Ovary (tissue), 10 donors: ENCODE measurements at regions of chr20 and their contacts with region 1.

Region 1: DNA sequence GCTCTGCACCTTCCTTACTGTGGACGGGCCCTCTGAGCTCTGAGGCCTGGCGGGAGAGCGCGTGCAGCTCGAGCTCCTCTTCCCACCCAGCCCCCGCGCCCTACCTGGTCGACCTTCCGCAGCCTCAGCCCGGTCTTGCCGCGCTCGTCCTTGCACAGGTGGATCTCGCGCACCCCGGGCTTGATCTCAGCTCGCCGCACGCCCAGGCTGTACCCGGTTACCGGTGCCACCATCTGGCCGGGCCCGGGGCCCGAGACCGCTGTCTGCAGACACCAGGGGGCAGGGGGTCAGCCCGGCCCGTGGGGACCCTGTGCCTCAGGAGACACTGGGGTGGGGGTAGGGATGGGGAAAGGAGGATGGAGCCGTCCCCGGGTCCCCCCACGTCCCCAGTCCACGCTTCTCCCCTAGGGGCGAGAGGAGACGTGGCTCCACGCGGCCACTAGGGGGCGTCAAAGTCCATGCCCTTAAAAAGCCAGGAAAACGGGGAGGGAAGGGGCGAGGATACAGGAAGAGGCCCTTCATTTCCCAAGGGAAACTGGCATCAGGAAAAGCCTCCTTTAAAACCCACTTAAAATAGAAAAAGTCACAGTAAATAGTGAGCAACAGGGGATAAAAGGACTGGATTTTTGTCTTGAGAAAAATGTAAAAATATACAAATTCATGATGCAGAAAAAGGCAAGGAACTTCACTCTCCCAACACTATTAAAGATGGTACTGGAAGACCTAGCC is 15.5 kb downstream of the SDCBP2 start:
- DNase-seq: peak; percentile 79 to 88 (median 85)
- H3K4me3 ChIP-seq: no peak overlapping the region
- H3K27ac ChIP-seq: no peak overlapping the region
- H3K4me1 ChIP-seq: peaks cover 2% of the 10 kb centered on the region
- H3K27me3 ChIP-seq: no peaks in the 10 kb centered on the region
- CTCF ChIP-seq: peak; percentile 82 to 97 (median 95)
- EP300 ChIP-seq: no peak
- POLR2A ChIP-seq: no peak

Region 2: DNA sequence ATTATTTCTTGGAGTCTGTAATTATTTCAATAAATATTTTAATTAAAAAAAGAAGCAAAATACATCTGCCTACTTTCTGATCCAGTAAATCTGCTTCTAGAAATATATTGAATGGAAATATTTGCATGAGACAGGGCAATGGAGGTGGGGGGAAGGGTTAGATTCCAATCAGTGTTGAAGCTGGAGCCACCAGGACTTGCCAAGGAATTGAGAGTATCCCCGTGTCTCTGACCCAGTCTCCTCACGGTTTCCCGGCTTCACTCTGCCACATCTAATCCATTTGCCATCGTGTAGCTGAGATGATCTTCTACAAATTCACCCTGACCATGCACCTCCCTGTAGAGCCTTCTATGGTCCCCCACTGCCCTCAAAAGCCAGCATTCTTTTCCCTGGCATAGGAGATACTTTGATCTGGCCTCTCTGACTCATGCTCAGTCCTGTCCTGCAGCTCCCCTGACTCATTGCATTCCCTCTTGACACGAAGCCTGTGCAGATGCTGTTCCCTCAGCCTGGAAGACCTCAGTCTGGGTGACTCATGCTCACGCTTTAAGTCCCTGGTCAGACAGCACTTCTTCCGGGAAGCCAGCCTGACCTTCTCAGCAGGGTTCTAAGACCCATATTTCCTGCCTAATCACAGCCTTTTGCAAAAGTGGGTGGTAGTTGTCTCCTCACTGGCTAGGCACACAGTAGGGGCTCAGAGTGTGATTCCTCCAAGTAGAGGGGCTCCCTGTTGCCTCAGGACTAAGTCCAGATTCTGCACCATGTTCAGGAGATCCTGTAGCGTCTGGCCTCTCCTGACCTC is 102.5 kb after region 1 on chr20:
- intact Hi-C with region 1: no loop called
- DNase-seq: no peak
- H3K4me3 ChIP-seq: no peak overlapping the region
- H3K27ac ChIP-seq: no peak overlapping the region
- H3K4me1 ChIP-seq: no peaks in the 10 kb centered on the region
- H3K27me3 ChIP-seq: no peaks in the 10 kb centered on the region
- CTCF ChIP-seq: no peak
- EP300 ChIP-seq: no peak
- POLR2A ChIP-seq: no peak

Region 3: DNA sequence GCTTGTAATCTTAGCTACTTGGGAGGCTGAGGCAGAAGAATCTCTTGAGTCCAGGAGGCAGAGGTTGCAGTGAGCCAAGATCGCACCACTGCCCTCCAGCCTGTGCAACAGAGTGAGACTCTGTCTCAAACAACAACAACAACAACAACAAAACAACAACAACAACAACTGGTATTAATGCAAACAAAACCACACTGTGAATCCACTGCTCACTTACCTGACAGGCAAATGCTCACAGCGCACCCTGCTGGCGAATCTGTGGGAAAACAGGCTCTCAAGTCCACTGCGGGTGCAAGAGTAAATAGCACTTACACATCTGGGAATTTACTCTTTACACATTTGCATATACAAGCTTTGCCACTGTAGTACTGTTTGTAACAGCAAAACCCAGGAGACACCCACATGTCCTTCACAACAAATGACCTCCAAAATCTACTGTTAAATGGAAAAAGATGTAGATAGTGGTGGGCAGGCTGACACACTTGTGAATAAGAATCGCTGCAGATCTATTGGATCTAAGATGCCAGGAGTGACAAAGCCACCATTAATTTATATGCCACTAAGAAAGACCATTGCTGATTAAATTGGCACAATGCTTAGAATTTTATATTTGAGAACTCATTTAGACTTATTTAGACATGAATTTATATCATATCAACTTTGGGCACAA is 124.0 kb after region 1 on chr20:
- intact Hi-C with region 1: loop called (anchors 5 kb)
- DNase-seq: peak; percentile 57 to 73 (median 69)
- H3K4me3 ChIP-seq: no peak overlapping the region
- H3K27ac ChIP-seq: no peak overlapping the region
- H3K4me1 ChIP-seq: no peaks in the 10 kb centered on the region
- H3K27me3 ChIP-seq: no peaks in the 10 kb centered on the region
- CTCF ChIP-seq: peak; percentile 50 to 72 (median 57)
- EP300 ChIP-seq: no peak
- POLR2A ChIP-seq: no peak

Region 4: GRCh38 chr20:1466211-1467081 is 153.0 kb after region 1 on chr20 and contains the start of gene NSFL1C:
- intact Hi-C with region 1: loop called in 1 of 4 experiments (anchors 5 kb)
- DNase-seq: peak; percentile 93 to 97 (median 96)
- H3K4me3 ChIP-seq: peak within 1 kb of the TSS; percentile 86
- H3K27ac ChIP-seq: peak within 1 kb of the TSS; percentile 16 to 69
- H3K4me1 ChIP-seq: peaks cover 10% of the 10 kb centered on the region
- H3K27me3 ChIP-seq: no peaks in the 10 kb centered on the region
- CTCF ChIP-seq: peak; percentile 96 to 99 (median 98)
- EP300 ChIP-seq: no peak
- POLR2A ChIP-seq: peak; percentile 71
- total RNA-seq, gene NSFL1C: 23.4 to 79.6 (median 63.2) TPM